Astrocyte of the cerebellum (primary cell): ENCODE measurements at regions of chr13 and their contacts with region 1.

Region 1: DNA sequence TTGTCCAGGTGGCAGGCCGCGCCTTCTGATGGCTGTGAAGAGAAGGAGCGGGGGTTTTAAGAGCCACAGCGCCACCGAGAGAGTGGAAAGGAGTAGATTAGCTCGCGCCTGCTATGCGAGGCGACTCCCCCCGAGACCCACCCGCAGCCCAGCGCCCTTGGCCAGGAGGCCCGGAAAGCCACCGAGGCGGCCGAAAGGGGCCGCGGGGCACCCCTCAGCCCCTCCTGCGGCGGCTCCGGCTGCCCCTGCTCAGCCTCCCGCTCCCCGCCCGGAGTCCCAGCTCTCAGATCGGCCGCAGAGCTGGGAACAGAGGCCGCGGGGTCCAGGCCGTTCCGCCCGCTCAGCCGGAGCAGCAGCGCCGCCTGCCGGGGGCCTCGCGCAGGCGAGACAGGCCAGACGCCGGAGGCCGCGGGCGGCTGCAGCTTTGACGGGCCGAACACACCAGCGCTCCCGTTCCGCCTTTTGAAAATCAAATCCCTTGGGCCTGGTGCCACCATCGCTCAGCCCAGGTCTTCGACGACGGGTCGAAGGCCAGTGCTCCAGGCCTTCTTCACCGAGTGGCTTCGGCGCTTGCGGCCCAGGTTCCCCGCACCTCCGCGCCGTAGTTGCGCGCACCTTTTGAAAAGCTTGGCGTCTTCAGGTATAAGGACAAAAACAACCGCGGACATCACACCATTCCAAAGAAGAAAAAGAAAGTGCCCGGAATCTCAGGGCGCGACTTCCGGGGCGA is 15.3 kb downstream of the CDX2 start:
- DNase-seq: peak; percentile 11
- H3K4me3 ChIP-seq: peak overlapping the region; percentile 29
- CTCF ChIP-seq: peak; percentile 74

Region 2: GRCh38 chr13:27826379-27827353 is 127.2 kb before region 1 on chr13:
- in situ Hi-C with region 1: loop called (anchors 25 kb)
- DNase-seq: peak; percentile 77
- H3K4me3 ChIP-seq: peak overlapping the region; percentile 30
- CTCF ChIP-seq: peak; percentile 81